IMR-90 (cell line): ENCODE measurements at regions of chr4 and their contacts with region 1.

Region 1: GRCh38 chr4:68271851-68272756 is 26.6 kb upstream of the TMPRSS11B start:
- DNase-seq: peak; percentile 73
- ATAC-seq: peak; percentile 87
- H3K4me3 ChIP-seq: peak overlapping the region; percentile 54
- H3K27ac ChIP-seq: no peak overlapping the region
- H3K4me1 ChIP-seq: 0 out of 2 replicates have a peak, but pooled peaks cover 3% of the 10 kb centered on the region
- H3K27me3 ChIP-seq: no peaks in the 10 kb centered on the region
- CTCF ChIP-seq: peak; percentile 77
- POLR2A ChIP-seq: no peak
- RAD21 ChIP-seq: peak; percentile 67

Region 2: GRCh38 chr4:68368691-68369480 is 96.8 kb after region 1 on chr4:
- CTCF ChIA-PET with region 1: interaction called, 13 read pairs
- POLR2A ChIA-PET with region 1: no interaction called
- dilution Hi-C with region 1: no loop called
- in situ Hi-C with region 1: no loop called
- intact Hi-C with region 1: no loop called
- DNase-seq: peak; percentile 69
- ATAC-seq: peak; percentile 68
- H3K4me3 ChIP-seq: no peak overlapping the region
- H3K27ac ChIP-seq: peak overlapping the region; percentile 83; the same call in 1 of the 2 replicates
- H3K4me1 ChIP-seq: peaks cover 14% of the 10 kb centered on the region
- H3K27me3 ChIP-seq: no peaks in the 10 kb centered on the region
- CTCF ChIP-seq: no peak
- POLR2A ChIP-seq: no peak
- RAD21 ChIP-seq: no peak

Region 3: GRCh38 chr4:68498413-68499007 is 226.4 kb after region 1 on chr4:
- CTCF ChIA-PET with region 1: no interaction called
- POLR2A ChIA-PET with region 1: no interaction called
- dilution Hi-C with region 1: no loop called
- in situ Hi-C with region 1: no loop called
- intact Hi-C with region 1: loop called (anchors 1 kb)
- DNase-seq: peak; percentile 62
- ATAC-seq: peak; percentile 96
- H3K4me3 ChIP-seq: no peak overlapping the region
- H3K27ac ChIP-seq: no peak overlapping the region
- H3K4me1 ChIP-seq: no peaks in the 10 kb centered on the region
- H3K27me3 ChIP-seq: no peaks in the 10 kb centered on the region
- CTCF ChIP-seq: peak; percentile 88
- POLR2A ChIP-seq: no peak
- RAD21 ChIP-seq: peak; percentile 88

Region 4: GRCh38 chr4:69156913-69157312 is 884.8 kb after region 1 on chr4:
- CTCF ChIA-PET with region 1: no interaction called
- POLR2A ChIA-PET with region 1: no interaction called
- dilution Hi-C with region 1: no loop called
- in situ Hi-C with region 1: loop called (anchors 25 kb)
- intact Hi-C with region 1: no loop called
- DNase-seq: no peak
- ATAC-seq: no peak
- H3K4me3 ChIP-seq: no peak overlapping the region
- H3K27ac ChIP-seq: no peak overlapping the region
- H3K4me1 ChIP-seq: no peaks in the 10 kb centered on the region
- H3K27me3 ChIP-seq: no peaks in the 10 kb centered on the region
- CTCF ChIP-seq: peak; percentile 33; the same call in 1 of the 2 replicates
- POLR2A ChIP-seq: no peak
- RAD21 ChIP-seq: peak; percentile 34